ENCODE measurements at regions of chr5 and their contacts with region 1.

Region 1: GRCh38 chr5:103272377-103272776 is 13.8 kb downstream of the MACIR start:
- DNase-seq: no peak
- H3K4me3 ChIP-seq: no peak overlapping the region
- H3K27ac ChIP-seq: no peak overlapping the region
- H3K4me1 ChIP-seq: no peaks in the 10 kb centered on the region
- H3K27me3 ChIP-seq: no peaks in the 10 kb centered on the region
- CTCF ChIP-seq: no peak

Region 2: DNA sequence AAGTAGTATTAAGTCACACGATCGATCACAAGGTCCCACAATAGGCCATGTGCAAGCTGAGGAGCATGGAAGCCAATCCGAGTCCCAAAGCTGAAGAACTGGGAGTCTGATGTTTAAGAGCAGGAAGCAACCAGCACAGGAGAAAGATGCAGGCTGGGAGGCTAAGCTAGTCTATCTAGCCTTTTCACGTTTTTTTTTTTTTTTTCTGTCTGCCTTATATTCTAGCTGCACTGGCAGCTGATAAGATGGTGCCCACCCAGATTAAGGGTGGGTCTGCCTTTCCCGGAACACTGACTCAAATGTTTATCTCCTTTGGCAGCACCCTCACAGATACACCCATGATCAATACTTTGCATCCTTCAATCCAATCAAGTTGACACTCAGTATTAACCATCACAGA is 145.8 kb before region 1 on chr5:
- CTCF ChIA-PET with region 1: no interaction called
- dilution Hi-C with region 1: no loop called
- in situ Hi-C with region 1: no loop called
- intact Hi-C with region 1: no loop called
- DNase-seq: no peak
- H3K4me3 ChIP-seq: no peak overlapping the region
- H3K27ac ChIP-seq: no peak overlapping the region
- H3K4me1 ChIP-seq: no peaks in the 10 kb centered on the region
- H3K27me3 ChIP-seq: no peaks in the 10 kb centered on the region
- CTCF ChIP-seq: no peak

Region 3: DNA sequence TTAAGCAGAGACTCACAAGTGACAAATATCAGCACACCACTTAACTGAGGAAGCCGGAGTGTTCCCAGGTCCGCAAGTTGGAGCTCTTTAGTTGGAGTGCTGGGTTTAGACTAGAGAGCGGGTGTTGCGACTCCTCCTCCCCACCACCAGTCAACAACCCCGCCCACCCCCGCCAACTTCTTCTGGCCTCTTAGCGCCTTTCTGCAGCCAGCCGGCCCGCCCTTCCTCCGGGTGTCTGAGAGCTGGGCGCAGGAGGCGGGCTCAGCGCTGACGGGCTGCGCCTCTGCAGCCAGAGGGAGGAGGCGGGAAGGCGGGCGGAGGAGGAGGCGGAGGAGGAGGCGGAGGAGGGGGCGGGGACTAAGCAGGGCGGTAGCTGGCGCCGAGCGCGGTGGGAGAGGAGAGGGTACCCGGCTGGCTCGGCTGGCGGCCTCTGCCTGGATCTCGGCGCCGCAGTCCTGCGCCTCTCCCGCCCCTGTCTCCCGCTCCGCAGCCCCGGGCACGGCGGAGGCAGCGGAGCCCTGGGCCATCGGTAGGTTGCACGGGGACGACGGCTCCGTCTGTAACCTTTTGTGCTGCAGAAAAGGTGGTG is 13.9 kb before region 1 on chr5 and contains the start of gene MACIR:
- CTCF ChIA-PET with region 1: no interaction called
- dilution Hi-C with region 1: no loop called
- in situ Hi-C with region 1: no loop called
- intact Hi-C with region 1: loop called (anchors 1 kb)
- DNase-seq: peak; percentile 98
- H3K4me3 ChIP-seq: peak within 1 kb of the TSS; percentile 86 to 88 (median 88)
- H3K27ac ChIP-seq: peak within 1 kb of the TSS; percentile 35
- H3K4me1 ChIP-seq: peaks cover 5% of the 10 kb centered on the region
- H3K27me3 ChIP-seq: no peaks in the 10 kb centered on the region
- CTCF ChIP-seq: no peak
- total RNA-seq, gene MACIR: 7.2 to 7.5 TPM

Region 4: GRCh38 chr5:103605277-103605676 is 332.9 kb after region 1 on chr5:
- CTCF ChIA-PET with region 1: no interaction called
- dilution Hi-C with region 1: no loop called
- in situ Hi-C with region 1: no loop called
- intact Hi-C with region 1: no loop called
- DNase-seq: no peak
- H3K4me3 ChIP-seq: no peak overlapping the region
- H3K27ac ChIP-seq: no peak overlapping the region
- H3K4me1 ChIP-seq: no peaks in the 10 kb centered on the region
- H3K27me3 ChIP-seq: no peaks in the 10 kb centered on the region
- CTCF ChIP-seq: no peak